Transverse colon (tissue), 4 donors: ENCODE measurements at regions of chr21 and their contacts with region 1.

Region 1: GRCh38 chr21:43997766-43998742 is 14.1 kb upstream of the TRAPPC10 start:
- DNase-seq: no peak
- H3K4me3 ChIP-seq: no peak overlapping the region
- H3K27ac ChIP-seq: no peak overlapping the region
- H3K4me1 ChIP-seq: no peaks in the 10 kb centered on the region
- H3K27me3 ChIP-seq: no peaks in the 10 kb centered on the region
- CTCF ChIP-seq: no peak
- EP300 ChIP-seq: no peak
- POLR2A ChIP-seq: no peak

Region 2: GRCh38 chr21:43899307-43900077 is 98.6 kb before region 1 on chr21:
- in situ Hi-C with region 1: no loop called
- intact Hi-C with region 1: loop called (anchors 5 kb)
- DNase-seq: no peak
- H3K4me3 ChIP-seq: no peak overlapping the region
- H3K27ac ChIP-seq: no peak overlapping the region
- H3K4me1 ChIP-seq: peaks cover 0 to 23% (median 14%) of the 10 kb centered on the region in 4 donors
- H3K27me3 ChIP-seq: no peaks in the 10 kb centered on the region
- CTCF ChIP-seq: no peak
- EP300 ChIP-seq: no peak
- POLR2A ChIP-seq: no peak

Region 3: GRCh38 chr21:44011980-44012527 is 14.0 kb after region 1 on chr21 and contains the start of gene TRAPPC10:
- in situ Hi-C with region 1: no loop called
- intact Hi-C with region 1: no loop called
- DNase-seq: peak; percentile 89
- H3K4me3 ChIP-seq: peak within 1 kb of the TSS; percentile 70 to 99 (median 94)
- H3K27ac ChIP-seq: peak within 1 kb of the TSS; percentile 89 to 100 (median 97)
- H3K4me1 ChIP-seq: peaks cover 11 to 40% (median 27%) of the 10 kb centered on the region in 4 donors
- H3K27me3 ChIP-seq: no peaks in the 10 kb centered on the region
- CTCF ChIP-seq: no peak
- EP300 ChIP-seq: no peak
- POLR2A ChIP-seq: peak; percentile 79
- total RNA-seq, gene TRAPPC10: 71.0 to 81.5 (median 79.8) TPM

Region 4: DNA sequence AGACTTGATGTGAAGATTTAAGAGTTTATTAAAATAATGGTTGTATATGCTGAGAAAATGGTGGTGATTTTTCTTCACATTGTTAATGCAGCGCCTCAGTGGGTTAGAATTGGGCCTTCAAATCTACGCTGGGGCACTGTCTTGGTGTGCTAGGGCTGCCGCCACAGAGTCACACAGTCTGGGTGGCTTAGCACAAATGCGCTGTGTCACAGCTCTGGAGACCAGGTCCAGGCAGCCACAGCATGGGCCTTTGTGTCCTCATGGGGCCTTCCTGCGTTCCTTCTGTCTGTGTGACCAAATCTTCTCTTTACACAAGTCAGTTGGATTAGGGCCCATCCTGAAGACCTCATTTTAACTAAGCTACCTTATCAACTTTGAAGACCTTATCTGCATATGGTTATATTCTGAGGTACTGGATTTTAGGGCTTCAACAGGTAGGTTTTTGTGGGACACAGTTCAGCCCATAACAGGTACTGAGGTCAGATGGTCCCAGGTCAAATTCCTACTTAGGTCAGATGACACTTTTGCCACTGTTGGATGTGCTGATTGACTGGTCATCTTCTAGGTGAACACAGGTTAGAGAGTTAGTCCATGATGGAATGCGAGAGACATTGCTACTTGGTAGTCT is 31.5 kb after region 1 on chr21:
- in situ Hi-C with region 1: no loop called
- intact Hi-C with region 1: no loop called
- DNase-seq: no peak
- H3K4me3 ChIP-seq: no peak overlapping the region
- H3K27ac ChIP-seq: no peak overlapping the region
- H3K4me1 ChIP-seq: peaks cover 0 to 17% (median 15%) of the 10 kb centered on the region in 4 donors
- H3K27me3 ChIP-seq: no peaks in the 10 kb centered on the region
- CTCF ChIP-seq: no peak
- EP300 ChIP-seq: no peak
- POLR2A ChIP-seq: no peak